CD14-positive monocyte (primary cell): ENCODE measurements at regions of chr16 and their contacts with region 1.

Region 1: GRCh38 chr16:47096297-47096696 is 47.4 kb downstream of the NETO2 start:
- DNase-seq: no peak
- H3K4me3 ChIP-seq: no peak overlapping the region
- H3K4me3 Mint-ChIP-seq: no peak overlapping the region
- H3K27ac ChIP-seq: no peak overlapping the region
- H3K27ac Mint-ChIP-seq: peak overlapping the region in 1 of 7 donors; percentile 24
- H3K4me1 ChIP-seq: no peaks in the 10 kb centered on the region
- H3K4me1 Mint-ChIP-seq: no peaks in the 10 kb centered on the region
- H3K27me3 ChIP-seq: no peaks in the 10 kb centered on the region
- H3K27me3 Mint-ChIP-seq: no peaks in the 10 kb centered on the region
- CTCF ChIP-seq: no peak

Region 2: DNA sequence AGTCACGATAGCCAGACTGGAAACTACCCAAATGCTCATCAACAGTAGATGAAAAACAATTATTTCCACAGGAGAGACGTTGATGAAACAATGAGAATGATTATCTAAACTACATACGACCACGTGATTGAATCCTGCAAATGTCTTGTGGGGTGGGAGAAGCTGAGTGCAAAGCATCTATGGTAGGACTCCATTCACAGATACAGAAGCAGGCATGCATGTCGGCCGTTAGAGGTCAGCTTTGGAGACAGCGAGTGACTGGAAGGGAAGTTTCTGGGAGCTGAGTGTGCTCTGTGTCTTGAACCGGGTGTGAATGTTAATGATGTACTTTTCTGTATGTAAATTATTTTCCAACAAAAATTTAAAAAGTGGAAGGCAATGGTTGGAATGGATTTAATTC is 51.3 kb before region 1 on chr16:
- intact Hi-C with region 1: loop called in 1 of 2 experiments (anchors 10 kb)
- DNase-seq: peak; percentile 8 to 40 (median 21)
- H3K4me3 ChIP-seq: peak overlapping the region in 1 of 3 experiments; percentile 7
- H3K4me3 Mint-ChIP-seq: peak overlapping the region in 1 of 2 donors; percentile 65
- H3K27ac ChIP-seq: peak overlapping the region in 1 of 2 donors; percentile 30
- H3K27ac Mint-ChIP-seq: peak overlapping the region in 5 of 7 donors; percentile 5 to 84 (median 55)
- H3K4me1 ChIP-seq: peaks cover 7 to 12% of the 10 kb centered on the region in 2 donors
- H3K4me1 Mint-ChIP-seq: peaks cover 21% of the 10 kb centered on the region
- H3K27me3 ChIP-seq: no peaks in the 10 kb centered on the region
- H3K27me3 Mint-ChIP-seq: peaks cover 0 to 6% (median 0%) of the 10 kb centered on the region in 3 donors
- CTCF ChIP-seq: no peak

Region 3: GRCh38 chr16:47058295-47059086 is 37.8 kb before region 1 on chr16:
- intact Hi-C with region 1: no loop called
- DNase-seq: no peak
- H3K4me3 ChIP-seq: no peak overlapping the region
- H3K4me3 Mint-ChIP-seq: no peak overlapping the region
- H3K27ac ChIP-seq: no peak overlapping the region
- H3K27ac Mint-ChIP-seq: peak overlapping the region in 1 of 7 donors; percentile 42
- H3K4me1 ChIP-seq: no peaks in the 10 kb centered on the region
- H3K4me1 Mint-ChIP-seq: no peaks in the 10 kb centered on the region
- H3K27me3 ChIP-seq: no peaks in the 10 kb centered on the region
- H3K27me3 Mint-ChIP-seq: peaks cover 0 to 4% (median 4%) of the 10 kb centered on the region in 3 donors
- CTCF ChIP-seq: no peak

Region 4: DNA sequence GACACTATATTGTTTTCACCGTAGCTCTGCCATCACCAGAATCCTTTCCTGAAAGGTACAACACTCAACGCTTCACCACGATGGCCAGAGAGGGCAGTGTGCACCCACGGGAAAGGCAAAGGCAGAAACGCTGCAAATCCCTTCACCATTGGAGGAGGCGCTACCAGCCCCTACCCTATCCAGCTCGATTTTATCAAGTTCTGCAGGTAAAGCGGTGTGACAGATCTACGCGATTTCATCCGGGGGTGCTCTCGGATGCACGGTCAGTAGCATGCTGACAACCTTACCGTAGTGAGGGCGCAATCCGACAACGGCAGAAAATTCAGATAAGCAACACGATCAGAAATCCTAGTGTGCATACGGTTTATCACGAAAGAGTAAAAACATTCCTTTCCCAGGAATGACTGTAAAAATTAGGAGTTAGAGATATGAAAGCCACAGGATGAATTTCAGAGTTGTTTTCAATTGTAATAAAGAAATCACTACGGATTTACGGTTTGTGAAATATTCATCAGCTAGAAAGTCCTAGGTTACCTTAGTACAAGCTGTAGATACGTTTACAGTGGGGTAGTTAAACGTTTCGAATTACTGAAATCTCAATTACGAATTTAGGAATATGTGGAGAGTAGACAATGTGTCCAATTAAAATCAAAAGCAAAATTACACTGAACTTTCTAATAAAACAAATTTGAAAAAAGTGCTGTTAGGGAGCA is 45.6 kb after region 1 on chr16:
- intact Hi-C with region 1: no loop called
- DNase-seq: peak; percentile 69 to 76 (median 74)
- H3K4me3 ChIP-seq: peak overlapping the region; percentile 67 to 86 (median 84)
- H3K4me3 Mint-ChIP-seq: peak overlapping the region; percentile 89 to 96
- H3K27ac ChIP-seq: peak overlapping the region in 1 of 2 donors; percentile 71
- H3K27ac Mint-ChIP-seq: peak overlapping the region; percentile 85 to 92 (median 91)
- H3K4me1 ChIP-seq: peaks cover 12 to 45% of the 10 kb centered on the region in 2 donors
- H3K4me1 Mint-ChIP-seq: peaks cover 35% of the 10 kb centered on the region
- H3K27me3 ChIP-seq: peaks cover 5 to 22% of the 10 kb centered on the region in 2 donors
- H3K27me3 Mint-ChIP-seq: peaks cover 14 to 25% (median 17%) of the 10 kb centered on the region in 3 donors
- CTCF ChIP-seq: peak; percentile 87